Upper lobe of right lung (tissue), 1 donor: ENCODE measurements at regions of chr17 and their contacts with region 1.

Region 1: DNA sequence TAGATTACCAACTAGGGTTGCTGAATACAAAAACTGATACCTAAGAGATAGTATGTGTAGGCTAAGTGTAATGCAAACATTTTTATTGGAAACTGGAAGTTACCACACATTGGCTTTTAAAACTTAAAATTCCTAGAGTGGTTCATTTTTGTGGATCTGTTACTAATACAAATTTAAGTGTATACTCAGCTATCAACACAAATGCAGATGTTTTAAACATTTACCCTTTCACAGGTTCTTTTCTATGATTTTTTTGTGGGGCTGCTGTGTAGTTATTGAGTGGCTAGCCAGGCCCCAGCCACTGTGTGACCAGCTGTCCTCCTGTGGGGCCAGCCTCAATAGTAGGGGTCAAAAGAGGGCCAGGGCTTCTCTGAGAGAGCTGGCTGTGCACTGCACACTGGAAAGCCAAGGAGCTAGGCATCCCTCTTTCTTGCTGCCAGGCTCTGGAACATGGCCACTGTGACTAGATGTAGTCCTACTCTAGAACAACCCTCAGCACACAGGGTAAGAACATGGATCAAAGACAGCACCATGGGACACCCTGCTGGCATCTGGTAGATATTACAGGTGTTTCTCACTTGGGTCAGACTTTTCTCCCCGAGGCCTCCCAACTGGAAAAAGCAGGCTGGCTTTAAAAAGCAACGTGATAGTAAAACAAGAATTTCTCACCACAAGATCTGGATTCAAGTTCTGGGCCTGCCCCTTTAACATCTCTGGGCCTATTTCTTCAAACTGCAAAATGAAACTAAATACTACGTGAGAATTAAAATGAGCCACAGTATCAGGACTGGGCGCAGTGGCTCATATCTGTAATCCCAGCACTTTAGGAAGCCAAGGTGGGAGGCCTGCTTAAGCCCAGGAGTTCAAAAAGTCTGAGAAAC is 7.3 kb upstream of the VEZF1 start:
- DNase-seq: no peak
- ATAC-seq: peak; percentile 96
- H3K4me3 ChIP-seq: no peak overlapping the region
- H3K27ac ChIP-seq: peak overlapping the region; percentile 19
- H3K4me1 ChIP-seq: peaks cover 17% of the 10 kb centered on the region
- H3K27me3 ChIP-seq: no peaks in the 10 kb centered on the region
- CTCF ChIP-seq: peak; percentile 65

Region 2: GRCh38 chr17:57584050-57584551 is 411.2 kb before region 1 on chr17:
- intact Hi-C with region 1: no loop called
- DNase-seq: no peak
- ATAC-seq: no peak
- H3K4me3 ChIP-seq: no peak overlapping the region
- H3K27ac ChIP-seq: no peak overlapping the region
- H3K4me1 ChIP-seq: no peaks in the 10 kb centered on the region
- H3K27me3 ChIP-seq: no peaks in the 10 kb centered on the region
- CTCF ChIP-seq: no peak

Region 3: GRCh38 chr17:57855391-57856035 is 139.8 kb before region 1 on chr17:
- intact Hi-C with region 1: loop called (anchors 5 kb)
- DNase-seq: no peak
- ATAC-seq: peak; percentile 13
- H3K4me3 ChIP-seq: no peak overlapping the region
- H3K27ac ChIP-seq: no peak overlapping the region
- H3K4me1 ChIP-seq: peaks cover 33% of the 10 kb centered on the region
- H3K27me3 ChIP-seq: no peaks in the 10 kb centered on the region
- CTCF ChIP-seq: no peak

Region 4: DNA sequence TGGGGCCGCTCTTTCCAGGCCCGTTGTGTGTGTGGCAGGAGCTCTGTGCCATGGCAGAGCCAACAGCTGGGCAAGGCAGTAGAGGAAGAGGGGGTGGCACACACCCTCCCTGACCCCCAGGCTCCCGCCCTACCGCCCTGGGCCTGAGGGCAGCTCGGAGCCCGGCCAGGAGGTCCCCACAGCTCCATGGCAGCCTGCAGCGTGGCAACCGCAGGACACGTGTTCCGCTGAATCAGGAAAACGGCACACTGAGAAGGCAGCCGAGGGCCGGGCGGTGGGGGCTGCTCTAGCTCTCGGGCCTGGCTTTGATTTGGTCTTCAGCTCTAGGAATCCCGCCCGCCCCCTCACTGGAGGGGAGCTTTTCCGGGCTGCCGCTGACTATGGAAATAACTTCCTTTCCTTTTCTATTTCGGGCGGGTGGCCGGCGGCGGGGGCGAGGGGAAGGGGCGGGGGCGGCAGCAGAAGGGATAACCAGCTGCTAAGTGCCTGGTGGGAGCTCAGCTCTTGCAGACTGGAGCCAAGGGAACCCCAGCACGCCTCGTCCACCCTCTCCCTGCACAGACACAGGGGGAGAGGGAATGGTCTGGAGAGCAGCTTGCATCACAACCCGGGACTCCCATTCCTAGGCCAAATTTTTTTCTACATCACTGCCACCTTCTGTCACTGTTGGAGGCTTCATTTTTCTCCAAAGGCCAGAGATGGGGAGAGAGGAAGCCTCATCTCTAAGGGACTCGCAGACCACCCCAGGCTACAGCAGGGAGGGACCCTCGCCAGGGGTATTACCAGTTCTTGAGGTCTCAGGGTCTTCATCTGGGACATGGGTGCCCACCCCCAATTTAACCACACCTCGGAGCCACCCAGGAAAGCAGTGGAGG is 120.6 kb before region 1 on chr17:
- intact Hi-C with region 1: loop called (anchors 5 kb)
- DNase-seq: no peak
- ATAC-seq: peak; percentile 43
- H3K4me3 ChIP-seq: peak overlapping the region; percentile 21
- H3K27ac ChIP-seq: peak overlapping the region; percentile 80
- H3K4me1 ChIP-seq: peaks cover 39% of the 10 kb centered on the region
- H3K27me3 ChIP-seq: no peaks in the 10 kb centered on the region
- CTCF ChIP-seq: no peak

Region 5: GRCh38 chr17:57911834-57912673 is 83.3 kb before region 1 on chr17:
- intact Hi-C with region 1: no loop called
- DNase-seq: peak; percentile 89
- ATAC-seq: peak; percentile 82
- H3K4me3 ChIP-seq: no peak overlapping the region
- H3K27ac ChIP-seq: peak overlapping the region; percentile 68
- H3K4me1 ChIP-seq: peaks cover 27% of the 10 kb centered on the region
- H3K27me3 ChIP-seq: no peaks in the 10 kb centered on the region
- CTCF ChIP-seq: no peak

Region 6: GRCh38 chr17:57927048-57927723 is 68.1 kb before region 1 on chr17:
- intact Hi-C with region 1: no loop called
- DNase-seq: no peak
- ATAC-seq: peak; percentile 52
- H3K4me3 ChIP-seq: no peak overlapping the region
- H3K27ac ChIP-seq: peak overlapping the region; percentile 47
- H3K4me1 ChIP-seq: peaks cover 51% of the 10 kb centered on the region
- H3K27me3 ChIP-seq: no peaks in the 10 kb centered on the region
- CTCF ChIP-seq: no peak